SK-N-SH (cell line): ENCODE measurements at regions of chr7 and their contacts with region 1.

Region 1: GRCh38 chr7:104267701-104268368 is 60.0 kb upstream of the ORC5 start:
- DNase-seq: peak; percentile 36
- H3K4me3 ChIP-seq: no peak overlapping the region
- H3K27ac ChIP-seq: no peak overlapping the region
- H3K4me1 ChIP-seq: no peaks in the 10 kb centered on the region
- H3K27me3 ChIP-seq: 0 out of 2 replicates have a peak, but pooled peaks cover 5% of the 10 kb centered on the region
- CTCF ChIP-seq: peak; percentile 79
- EP300 ChIP-seq: no peak
- RAD21 ChIP-seq: peak; percentile 59

Region 2: GRCh38 chr7:103524042-103524907 is 743.6 kb before region 1 on chr7:
- CTCF ChIA-PET with region 1: interaction called, 17 read pairs
- POLR2A ChIA-PET with region 1: no interaction called
- DNase-seq: peak; percentile 72
- H3K4me3 ChIP-seq: no peak overlapping the region; a peak in 1 of 4 replicates
- H3K27ac ChIP-seq: no peak overlapping the region
- H3K4me1 ChIP-seq: peaks cover 0 to 5% of the 10 kb centered on the region in 2 experiments; a peak in 1 of 4 replicates
- H3K27me3 ChIP-seq: no peaks in the 10 kb centered on the region
- CTCF ChIP-seq: peak; percentile 77
- EP300 ChIP-seq: no peak
- RAD21 ChIP-seq: peak; percentile 99

Region 3: GRCh38 chr7:104089612-104090011 is 178.2 kb before region 1 on chr7:
- CTCF ChIA-PET with region 1: no interaction called
- POLR2A ChIA-PET with region 1: no interaction called
- DNase-seq: no peak
- H3K4me3 ChIP-seq: no peak overlapping the region
- H3K27ac ChIP-seq: no peak overlapping the region
- H3K4me1 ChIP-seq: peaks cover 0 to 3% of the 10 kb centered on the region in 2 experiments; a peak in 1 of 4 replicates
- H3K27me3 ChIP-seq: 0 out of 2 replicates have a peak, but pooled peaks cover 5% of the 10 kb centered on the region
- CTCF ChIP-seq: no peak
- EP300 ChIP-seq: no peak
- RAD21 ChIP-seq: no peak

Region 4: GRCh38 chr7:104179178-104179577 is 88.7 kb before region 1 on chr7:
- CTCF ChIA-PET with region 1: no interaction called
- POLR2A ChIA-PET with region 1: no interaction called
- DNase-seq: no peak
- H3K4me3 ChIP-seq: no peak overlapping the region
- H3K27ac ChIP-seq: no peak overlapping the region
- H3K4me1 ChIP-seq: no peaks in the 10 kb centered on the region
- H3K27me3 ChIP-seq: no peaks in the 10 kb centered on the region
- CTCF ChIP-seq: no peak
- EP300 ChIP-seq: no peak
- RAD21 ChIP-seq: no peak

Region 5: GRCh38 chr7:104240401-104240800 is 27.4 kb before region 1 on chr7:
- CTCF ChIA-PET with region 1: interaction called, 28 read pairs
- POLR2A ChIA-PET with region 1: no interaction called
- DNase-seq: no peak
- H3K4me3 ChIP-seq: no peak overlapping the region
- H3K27ac ChIP-seq: no peak overlapping the region
- H3K4me1 ChIP-seq: no peaks in the 10 kb centered on the region
- H3K27me3 ChIP-seq: peaks cover 4% of the 10 kb centered on the region; the same call in 1 of the 2 replicates
- CTCF ChIP-seq: no peak
- EP300 ChIP-seq: no peak
- RAD21 ChIP-seq: no peak

Region 6: GRCh38 chr7:104252404-104253134 is 15.3 kb before region 1 on chr7:
- CTCF ChIA-PET with region 1: interaction called, 50 read pairs
- POLR2A ChIA-PET with region 1: no interaction called
- DNase-seq: no peak
- H3K4me3 ChIP-seq: no peak overlapping the region
- H3K27ac ChIP-seq: no peak overlapping the region
- H3K4me1 ChIP-seq: no peaks in the 10 kb centered on the region
- H3K27me3 ChIP-seq: peaks cover 7% of the 10 kb centered on the region; the same call in 1 of the 2 replicates
- CTCF ChIP-seq: peak; percentile 44
- EP300 ChIP-seq: no peak
- RAD21 ChIP-seq: peak; percentile 21

Region 7: GRCh38 chr7:104862719-104863118 is 594.9 kb after region 1 on chr7:
- CTCF ChIA-PET with region 1: interaction called, 20 read pairs
- POLR2A ChIA-PET with region 1: no interaction called
- DNase-seq: peak; percentile 63
- H3K4me3 ChIP-seq: no peak overlapping the region
- H3K27ac ChIP-seq: no peak overlapping the region
- H3K4me1 ChIP-seq: peaks cover 0 to 4% of the 10 kb centered on the region in 2 experiments; a peak in 1 of 4 replicates
- H3K27me3 ChIP-seq: peaks cover 54% of the 10 kb centered on the region
- CTCF ChIP-seq: peak; percentile 58
- EP300 ChIP-seq: no peak
- RAD21 ChIP-seq: peak; percentile 66